GM12878 (cell line): ENCODE measurements at regions of chr13 and their contacts with region 1.

Region 1: DNA sequence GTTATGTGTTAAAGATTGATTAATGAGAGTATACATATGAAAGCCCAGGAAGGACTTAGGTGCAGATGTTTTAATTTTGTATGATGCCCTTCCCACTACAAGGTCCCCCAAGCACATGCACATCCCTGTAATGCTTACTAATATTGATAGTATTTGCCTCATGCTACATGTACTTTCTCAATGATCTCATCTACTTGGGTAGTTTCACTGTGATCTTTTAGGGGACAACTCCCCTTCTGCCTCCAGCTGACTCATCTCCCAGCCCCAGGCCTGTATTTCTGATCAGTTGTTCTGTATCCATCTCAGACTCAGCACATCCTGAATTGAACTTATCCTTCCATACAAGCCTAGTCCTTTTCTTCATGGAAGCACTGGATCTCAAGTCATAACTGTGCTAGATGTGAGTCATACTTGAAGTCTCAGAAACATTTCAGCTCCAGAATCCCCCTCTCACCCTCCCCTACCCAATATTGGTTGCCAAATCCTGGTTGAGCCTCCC is 49.4 kb upstream of the INTS6 start:
- DNase-seq: peak; percentile 65
- ATAC-seq: peak; percentile 96
- H3K4me3 ChIP-seq: 0 out of 2 replicates have a peak overlapping the region, but pooled peaks have one; percentile 3
- H3K27ac ChIP-seq: peak overlapping the region; percentile 46; the same call in 1 of the 2 replicates
- H3K4me1 ChIP-seq: peaks cover 9% of the 10 kb centered on the region
- H3K27me3 ChIP-seq: no peaks in the 10 kb centered on the region
- CTCF ChIP-seq: no peak
- EP300 ChIP-seq: peak; percentile 72 to 78; a peak in 2 of 4 replicates
- POLR2A ChIP-seq: no peak
- RAD21 ChIP-seq: no peak

Region 2: DNA sequence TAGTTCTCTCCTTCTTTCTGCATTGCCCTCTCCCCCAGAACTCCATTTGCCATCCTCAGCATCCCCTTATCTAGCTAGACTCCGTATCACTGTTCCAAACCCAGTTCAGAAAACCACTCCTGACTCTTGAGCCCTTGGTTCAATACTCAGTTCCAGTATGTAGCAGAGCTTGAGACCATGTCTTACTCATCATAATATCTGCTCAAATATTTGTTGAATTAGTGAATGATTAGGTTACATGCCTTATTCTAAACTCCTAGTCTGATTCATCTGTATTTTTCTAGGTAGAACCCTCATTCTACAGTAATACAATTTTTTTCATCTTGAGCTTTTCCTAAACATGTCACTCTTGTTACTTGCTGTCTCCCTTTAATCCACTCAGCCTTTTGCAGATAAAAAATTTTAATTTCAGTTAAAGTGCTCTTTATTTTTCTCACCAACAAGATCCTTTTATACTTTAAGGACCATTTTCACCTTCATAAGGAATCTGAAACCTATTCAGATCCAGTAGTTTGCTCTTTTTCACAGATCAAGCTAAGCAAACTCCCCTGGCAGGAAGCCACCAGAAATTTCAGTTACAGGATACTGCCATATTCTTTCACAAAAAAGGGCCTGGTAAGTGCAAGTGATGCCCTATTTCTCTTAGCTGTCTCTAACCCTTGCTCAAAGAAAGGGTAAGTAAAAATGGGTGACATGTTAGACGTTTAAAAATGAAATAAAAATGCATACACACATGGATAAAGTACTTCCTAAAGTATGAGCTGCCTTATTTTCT is 26.3 kb before region 1 on chr13:
- CTCF ChIA-PET with region 1: interaction called, 3 read pairs
- POLR2A ChIA-PET with region 1: no interaction called
- RAD21 ChIA-PET with region 1: no interaction called
- SMC1A ChIA-PET with region 1: interaction called, 13 read pairs
- in situ Hi-C with region 1: no loop called
- intact Hi-C with region 1: no loop called
- DNase-seq: no peak
- ATAC-seq: no peak
- H3K4me3 ChIP-seq: no peak overlapping the region
- H3K27ac ChIP-seq: no peak overlapping the region
- H3K4me1 ChIP-seq: no peaks in the 10 kb centered on the region
- H3K27me3 ChIP-seq: no peaks in the 10 kb centered on the region
- CTCF ChIP-seq: no peak
- EP300 ChIP-seq: no peak
- POLR2A ChIP-seq: no peak
- RAD21 ChIP-seq: no peak

Region 3: DNA sequence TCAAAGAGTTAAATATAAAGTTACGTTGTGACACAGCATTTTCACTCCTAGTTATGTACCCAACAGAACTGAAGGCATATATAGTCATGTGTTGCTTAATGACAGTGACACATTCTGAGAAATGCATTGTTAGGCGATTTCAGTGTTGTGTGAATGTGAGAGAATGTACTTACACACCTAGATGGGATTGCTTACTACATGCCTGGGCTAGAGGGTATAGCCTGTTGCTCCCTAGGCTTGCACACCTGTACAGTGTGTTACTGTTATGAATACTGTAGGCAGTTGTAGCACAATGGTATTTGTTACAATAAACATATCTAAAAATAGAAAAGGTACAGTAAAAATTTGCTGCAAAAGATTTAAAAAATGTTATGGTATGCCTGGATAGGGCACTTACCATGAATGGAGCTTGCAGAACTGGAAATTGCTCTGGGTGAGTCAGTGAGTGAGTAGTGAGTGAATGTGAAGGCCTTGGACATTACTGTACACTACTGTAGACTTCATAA is 212.5 kb after region 1 on chr13:
- CTCF ChIA-PET with region 1: no interaction called
- POLR2A ChIA-PET with region 1: no interaction called
- RAD21 ChIA-PET with region 1: no interaction called
- SMC1A ChIA-PET with region 1: no interaction called
- in situ Hi-C with region 1: no loop called
- intact Hi-C with region 1: loop called (anchors 5 kb)
- DNase-seq: peak; percentile 78
- ATAC-seq: peak; percentile 96
- H3K4me3 ChIP-seq: no peak overlapping the region
- H3K27ac ChIP-seq: peak overlapping the region; percentile 72
- H3K4me1 ChIP-seq: peaks cover 14% of the 10 kb centered on the region
- H3K27me3 ChIP-seq: no peaks in the 10 kb centered on the region
- CTCF ChIP-seq: no peak
- EP300 ChIP-seq: peak in 1 of 2 experiments; percentile 50; a peak in 1 of 4 replicates
- POLR2A ChIP-seq: no peak
- RAD21 ChIP-seq: no peak